Panc1 (cell line): ENCODE measurements at regions of chr2 and their contacts with region 1.

Region 1: DNA sequence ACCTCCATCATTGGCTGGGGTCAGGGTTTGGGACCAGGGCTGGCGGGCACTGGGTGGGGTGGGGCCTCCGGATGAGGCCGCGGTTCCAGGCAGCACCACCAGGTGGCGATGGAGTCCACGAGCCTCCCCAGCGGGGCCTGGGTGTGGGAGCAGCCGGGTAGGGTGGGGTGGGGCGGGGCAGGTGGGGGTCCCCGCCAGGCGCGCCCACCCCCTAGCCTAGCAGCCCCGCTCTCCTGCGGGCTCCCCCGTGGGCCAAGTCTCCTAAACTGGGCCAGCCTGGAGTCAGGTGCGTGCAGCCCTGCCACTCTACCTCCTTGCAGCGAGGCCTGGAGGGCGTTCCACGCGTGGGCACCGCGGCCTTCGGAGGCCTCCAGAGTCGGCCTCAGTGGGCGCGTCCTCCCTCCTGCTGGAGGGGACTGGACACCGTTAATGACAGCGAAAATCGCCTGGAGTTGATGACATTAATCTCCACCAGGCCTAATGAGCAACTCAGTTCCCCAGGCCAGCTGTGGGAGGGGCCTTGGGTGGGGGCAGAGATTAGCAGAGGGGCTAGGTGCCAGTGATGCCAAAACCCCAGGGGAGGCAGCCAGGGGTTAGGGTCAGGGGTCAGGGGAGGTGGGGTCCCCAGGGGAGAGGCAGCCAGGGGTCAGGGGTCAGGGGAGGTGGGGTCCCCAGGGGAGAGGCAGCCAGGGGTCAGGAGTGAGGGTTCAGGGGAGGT is 187.6 kb downstream of the TWIST2 start:
- DNase-seq: peak; percentile 10
- ATAC-seq: peak; percentile 89
- H3K4me3 ChIP-seq: no peak overlapping the region; a peak in 1 of 4 replicates
- H3K27ac ChIP-seq: no peak overlapping the region
- H3K4me1 ChIP-seq: peaks cover 5% of the 10 kb centered on the region
- H3K27me3 ChIP-seq: peaks cover 6% of the 10 kb centered on the region
- CTCF ChIP-seq: peak; percentile 95

Region 2: GRCh38 chr2:239106314-239106908 is 70.9 kb after region 1 on chr2:
- CTCF ChIA-PET with region 1: no interaction called
- POLR2A ChIA-PET with region 1: no interaction called
- in situ Hi-C with region 1: no loop called
- intact Hi-C with region 1: loop called (anchors 10 kb)
- DNase-seq: peak; percentile 2
- ATAC-seq: peak; percentile 92
- H3K4me3 ChIP-seq: no peak overlapping the region
- H3K27ac ChIP-seq: no peak overlapping the region
- H3K4me1 ChIP-seq: no peaks in the 10 kb centered on the region
- H3K27me3 ChIP-seq: no peaks in the 10 kb centered on the region
- CTCF ChIP-seq: peak; percentile 84